HepG2 (cell line): ENCODE measurements at regions of chr9 and their contacts with region 1.

Region 1: DNA sequence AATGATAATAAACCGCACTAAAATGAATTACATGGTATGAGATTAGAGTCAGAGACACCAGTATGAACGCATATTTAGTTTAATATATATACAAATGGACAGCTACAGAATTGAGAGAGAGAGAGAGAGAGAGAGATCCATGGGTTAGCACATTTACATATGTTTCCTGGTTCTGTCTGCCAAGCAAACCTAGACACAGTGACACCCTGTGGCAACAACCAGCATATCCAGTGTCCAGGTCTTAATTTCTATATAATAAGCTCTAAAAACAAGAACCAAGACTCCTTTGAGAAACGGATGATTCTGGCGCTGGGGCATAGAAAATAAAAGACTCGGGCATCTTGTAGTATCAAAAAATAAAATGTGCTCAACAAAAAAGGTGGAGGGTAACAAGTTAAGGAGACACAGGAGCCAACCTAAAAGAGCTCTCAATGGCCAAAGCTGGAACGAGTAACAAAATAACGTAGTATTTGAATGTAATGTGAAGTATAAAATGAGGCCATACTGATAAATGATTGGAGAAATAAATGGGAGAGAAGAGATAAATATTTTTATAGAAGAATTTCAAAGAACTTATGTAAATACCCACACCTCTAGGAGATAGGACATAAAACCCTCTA is 84.5 kb downstream of the RFX3 start:
- DNase-seq: peak; percentile 54
- ATAC-seq: peak; percentile 91
- H3K4me3 ChIP-seq: no peak overlapping the region
- H3K27ac ChIP-seq: no peak overlapping the region
- H3K4me1 ChIP-seq: no peaks in the 10 kb centered on the region
- H3K27me3 ChIP-seq: no peaks in the 10 kb centered on the region; a peak in 1 of 5 replicates
- CTCF ChIP-seq: peak; percentile 65
- EP300 ChIP-seq: no peak
- POLR2A ChIP-seq: no peak
- RAD21 ChIP-seq: 0 out of 2 replicates have a peak, but pooled peaks have one; percentile 35

Region 2: DNA sequence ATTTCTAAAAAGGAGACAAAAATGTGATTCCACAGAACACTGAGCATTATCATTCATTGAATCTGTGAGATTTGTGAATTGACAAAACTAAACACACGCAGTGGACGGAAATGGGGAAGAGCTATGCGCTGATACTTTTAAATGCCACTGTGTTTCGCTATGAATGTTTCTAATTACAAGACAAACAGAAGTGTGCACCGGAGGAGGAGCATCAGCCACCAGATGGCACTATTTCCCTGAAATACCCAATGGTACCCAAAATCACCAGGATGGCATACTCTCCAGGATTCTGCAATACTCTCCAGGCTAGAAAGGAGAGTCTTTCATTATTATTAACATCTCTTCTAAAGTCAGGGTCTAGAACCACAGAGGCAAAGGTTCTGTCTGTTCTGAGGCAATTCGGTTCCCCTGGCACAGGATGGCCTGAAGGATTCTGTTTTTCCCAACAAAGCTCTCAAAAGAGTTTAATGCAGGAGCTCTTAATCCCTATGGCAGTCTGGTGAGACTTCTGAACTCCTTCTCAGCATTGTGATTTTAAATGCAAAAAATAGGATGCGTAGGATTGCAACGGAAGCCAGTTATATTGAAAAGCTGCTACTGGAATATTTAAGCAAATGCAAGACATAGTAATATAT is 583.6 kb before region 1 on chr9:
- CTCF ChIA-PET with region 1: interaction called, 9 read pairs
- POLR2A ChIA-PET with region 1: no interaction called
- in situ Hi-C with region 1: loop called (anchors 25 kb)
- intact Hi-C with region 1: loop called (anchors 1 kb)
- DNase-seq: peak; percentile 47
- ATAC-seq: peak; percentile 93
- H3K4me3 ChIP-seq: no peak overlapping the region
- H3K27ac ChIP-seq: no peak overlapping the region
- H3K4me1 ChIP-seq: no peaks in the 10 kb centered on the region
- H3K27me3 ChIP-seq: no peaks in the 10 kb centered on the region; a peak in 1 of 5 replicates
- CTCF ChIP-seq: peak; percentile 83
- EP300 ChIP-seq: no peak
- POLR2A ChIP-seq: no peak
- RAD21 ChIP-seq: peak; percentile 50; the same call in 1 of the 2 replicates

Region 3: GRCh38 chr9:2872257-2872935 is 568.9 kb before region 1 on chr9:
- CTCF ChIA-PET with region 1: interaction called, 3 read pairs
- POLR2A ChIA-PET with region 1: no interaction called
- in situ Hi-C with region 1: loop called (anchors 25 kb)
- intact Hi-C with region 1: loop called (anchors 1 kb)
- DNase-seq: peak; percentile 49
- ATAC-seq: peak; percentile 91
- H3K4me3 ChIP-seq: peak overlapping the region in 1 of 3 experiments; percentile 8; a peak in 2 of 6 replicates
- H3K27ac ChIP-seq: no peak overlapping the region
- H3K4me1 ChIP-seq: peaks cover 18% of the 10 kb centered on the region
- H3K27me3 ChIP-seq: peaks cover 2 to 10% of the 10 kb centered on the region in 2 experiments; a peak in 2 of 5 replicates
- CTCF ChIP-seq: peak; percentile 72
- EP300 ChIP-seq: no peak
- POLR2A ChIP-seq: no peak
- RAD21 ChIP-seq: no peak

Region 4: DNA sequence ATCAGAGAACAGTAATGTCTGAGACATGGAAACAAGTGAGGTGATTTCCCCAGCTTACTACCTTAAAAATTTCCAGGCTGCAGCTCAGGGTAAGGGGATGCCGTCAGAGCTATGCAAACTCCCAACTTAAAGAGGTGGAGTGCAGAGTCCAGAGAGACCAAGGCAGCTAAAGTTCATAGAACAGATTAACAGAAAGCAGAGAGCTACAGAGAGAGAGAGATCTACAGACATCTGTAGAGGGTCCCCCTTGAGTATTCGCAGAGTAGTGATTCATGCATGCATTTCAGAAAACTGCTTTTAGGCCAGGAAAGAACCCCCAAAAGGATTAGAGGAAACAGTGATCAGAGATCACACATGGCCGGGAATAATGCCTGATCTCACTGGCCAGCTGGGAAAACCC is 291.2 kb before region 1 on chr9:
- CTCF ChIA-PET with region 1: no interaction called
- POLR2A ChIA-PET with region 1: no interaction called
- in situ Hi-C with region 1: no loop called
- intact Hi-C with region 1: loop called (anchors 5 kb)
- DNase-seq: peak; percentile 35
- ATAC-seq: peak; percentile 81
- H3K4me3 ChIP-seq: no peak overlapping the region
- H3K27ac ChIP-seq: peak overlapping the region; percentile 77
- H3K4me1 ChIP-seq: peaks cover 59% of the 10 kb centered on the region
- H3K27me3 ChIP-seq: no peaks in the 10 kb centered on the region
- CTCF ChIP-seq: peak; percentile 23; the same call in 1 of the 2 replicates
- EP300 ChIP-seq: 0 out of 4 replicates have a peak, but pooled peaks of 1 of the 2 experiments have one; percentile 17
- POLR2A ChIP-seq: no peak
- RAD21 ChIP-seq: no peak

Region 5: DNA sequence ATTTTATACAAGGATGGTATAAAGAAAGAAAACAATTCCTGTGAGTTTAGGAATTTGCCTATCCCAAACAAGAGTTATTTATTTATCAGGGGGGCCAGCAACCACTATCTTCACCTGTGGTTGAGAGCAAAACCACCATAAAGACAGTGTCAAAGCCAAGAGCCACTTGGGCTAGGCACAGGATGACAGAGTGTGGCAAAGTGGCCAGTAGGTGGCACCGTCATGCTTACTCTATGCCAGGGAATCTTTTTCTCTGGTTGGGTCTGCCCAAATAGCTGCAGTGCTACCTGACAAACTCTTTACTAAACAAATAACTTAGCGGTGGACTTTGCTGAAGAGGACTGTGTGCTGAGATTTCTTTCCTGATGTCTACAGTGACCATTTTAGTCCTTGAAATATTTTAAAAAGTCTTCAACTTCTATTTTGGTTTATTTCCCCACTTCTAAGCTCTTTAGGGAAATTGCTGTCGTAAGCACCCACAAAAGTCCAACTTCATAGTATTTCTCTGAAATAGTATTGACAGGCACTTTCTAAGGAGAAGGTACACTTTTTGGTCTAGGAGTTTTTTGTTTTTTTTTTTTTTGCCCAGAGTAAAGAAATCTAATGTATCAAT is 200.5 kb before region 1 on chr9:
- CTCF ChIA-PET with region 1: interaction called, 28 read pairs
- POLR2A ChIA-PET with region 1: no interaction called
- in situ Hi-C with region 1: no loop called
- intact Hi-C with region 1: loop called (anchors 1 kb)
- DNase-seq: peak; percentile 60
- ATAC-seq: peak; percentile 99
- H3K4me3 ChIP-seq: no peak overlapping the region
- H3K27ac ChIP-seq: no peak overlapping the region
- H3K4me1 ChIP-seq: 0 out of 2 replicates have a peak, but pooled peaks cover 4% of the 10 kb centered on the region
- H3K27me3 ChIP-seq: no peaks in the 10 kb centered on the region
- CTCF ChIP-seq: peak; percentile 76
- EP300 ChIP-seq: no peak
- POLR2A ChIP-seq: no peak
- RAD21 ChIP-seq: peak; percentile 48; the same call in 1 of the 2 replicates

Region 6: DNA sequence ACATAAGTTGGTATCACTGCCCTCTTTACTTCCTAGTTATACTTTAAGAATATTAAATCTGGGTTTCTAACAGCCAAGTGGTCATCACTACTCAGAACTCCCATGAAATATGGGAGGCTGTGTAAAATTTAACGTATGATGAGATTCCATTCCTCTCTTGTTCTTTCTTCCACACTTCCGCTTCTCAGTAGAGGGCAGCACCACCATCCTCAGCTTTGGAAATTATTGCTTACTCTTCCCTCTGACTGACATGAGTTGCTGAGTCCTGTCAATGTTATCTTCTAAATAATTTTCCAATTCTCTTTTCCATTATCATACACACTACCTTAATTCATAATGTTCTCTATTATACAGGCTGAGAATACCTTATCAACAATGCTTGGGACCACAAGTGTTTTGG is 109.5 kb before region 1 on chr9:
- CTCF ChIA-PET with region 1: interaction called, 4 read pairs
- POLR2A ChIA-PET with region 1: no interaction called
- in situ Hi-C with region 1: no loop called
- intact Hi-C with region 1: loop called (anchors 1 kb)
- DNase-seq: peak; percentile 17
- ATAC-seq: peak; percentile 64
- H3K4me3 ChIP-seq: no peak overlapping the region
- H3K27ac ChIP-seq: no peak overlapping the region
- H3K4me1 ChIP-seq: no peaks in the 10 kb centered on the region
- H3K27me3 ChIP-seq: no peaks in the 10 kb centered on the region
- CTCF ChIP-seq: peak; percentile 53
- EP300 ChIP-seq: no peak
- POLR2A ChIP-seq: no peak
- RAD21 ChIP-seq: no peak

Region 7: DNA sequence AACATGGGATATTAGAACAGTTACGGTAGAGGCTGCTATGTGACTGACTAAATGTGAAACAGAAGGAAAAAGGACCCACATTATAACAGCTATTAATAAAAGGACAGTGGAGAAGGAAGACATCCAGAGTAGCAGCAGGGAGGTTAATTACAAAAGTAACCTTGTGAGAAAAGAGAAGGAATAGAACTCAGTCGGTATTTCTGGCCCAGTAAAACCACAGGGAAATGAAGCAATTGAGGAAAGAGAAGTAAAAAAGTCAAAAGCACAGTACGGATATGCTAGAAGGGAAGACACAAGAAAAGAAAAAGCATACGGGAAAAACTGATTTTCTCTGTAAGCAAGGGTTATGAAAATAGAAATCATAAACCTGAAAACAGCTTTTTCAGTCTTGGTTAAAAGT is 80.2 kb before region 1 on chr9:
- CTCF ChIA-PET with region 1: no interaction called
- POLR2A ChIA-PET with region 1: no interaction called
- in situ Hi-C with region 1: no loop called
- intact Hi-C with region 1: no loop called
- DNase-seq: no peak
- ATAC-seq: no peak
- H3K4me3 ChIP-seq: no peak overlapping the region
- H3K27ac ChIP-seq: no peak overlapping the region
- H3K4me1 ChIP-seq: 0 out of 2 replicates have a peak, but pooled peaks cover 5% of the 10 kb centered on the region
- H3K27me3 ChIP-seq: no peaks in the 10 kb centered on the region
- CTCF ChIP-seq: no peak
- EP300 ChIP-seq: no peak
- POLR2A ChIP-seq: no peak
- RAD21 ChIP-seq: no peak

Region 8: DNA sequence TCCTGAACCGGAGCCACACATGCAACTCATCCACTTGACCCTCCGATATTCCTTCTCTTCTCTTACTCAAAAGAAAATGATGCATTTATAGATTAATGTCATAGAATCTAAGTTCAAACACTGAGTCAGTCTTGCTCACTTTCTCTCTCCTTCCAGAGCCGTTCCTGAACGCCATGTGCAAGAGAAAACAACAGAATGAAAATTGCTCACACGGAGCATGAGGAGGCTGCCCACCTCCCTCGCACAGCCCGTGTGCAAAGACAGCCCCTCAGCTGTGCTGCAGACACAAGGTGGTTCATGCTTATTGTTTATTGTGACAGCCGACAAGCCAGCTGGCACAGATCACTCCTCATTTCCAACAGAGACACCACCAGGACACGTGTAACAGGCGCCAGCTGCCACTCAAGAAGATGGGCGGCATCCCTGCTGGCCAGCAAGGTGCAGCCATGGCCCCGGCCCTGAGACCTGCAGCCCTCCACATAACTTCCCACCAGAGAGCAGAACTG is 567.8 kb after region 1 on chr9:
- CTCF ChIA-PET with region 1: no interaction called
- POLR2A ChIA-PET with region 1: no interaction called
- in situ Hi-C with region 1: no loop called
- intact Hi-C with region 1: no loop called
- DNase-seq: no peak
- ATAC-seq: no peak
- H3K4me3 ChIP-seq: no peak overlapping the region
- H3K27ac ChIP-seq: no peak overlapping the region
- H3K4me1 ChIP-seq: no peaks in the 10 kb centered on the region
- H3K27me3 ChIP-seq: no peaks in the 10 kb centered on the region
- CTCF ChIP-seq: no peak
- EP300 ChIP-seq: no peak
- POLR2A ChIP-seq: no peak
- RAD21 ChIP-seq: no peak